Activated CD4-positive, alpha-beta T cell treated with anti-CD3 and anti-CD28 coated beads, Interleukin-2, amount 10 ng/mL, durations not matched to agents 24 days and 14 days (primary cell): ENCODE measurements at regions of chr18 and their contacts with region 1.

Region 1: DNA sequence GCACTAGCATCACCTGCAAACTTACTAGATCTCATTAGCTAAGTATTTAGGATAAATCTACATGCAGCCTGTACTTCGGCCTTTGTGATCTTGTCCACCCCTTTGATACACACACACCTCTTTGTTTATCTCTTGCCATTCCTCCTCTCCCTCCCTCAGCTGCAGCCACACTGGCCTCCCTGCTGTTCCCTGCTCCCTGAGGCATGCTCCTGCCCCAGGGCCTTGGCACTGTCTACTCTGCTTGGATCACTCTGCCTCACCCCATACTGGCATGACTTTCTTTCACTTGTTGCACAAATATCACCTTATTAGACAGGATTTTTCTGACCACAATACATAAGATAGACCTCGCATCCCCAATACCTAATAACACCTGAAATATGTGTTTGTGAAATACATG is 22.5 kb upstream of the TAF4B start:
- DNase-seq: no peak
- H3K4me3 Mint-ChIP-seq: no peak overlapping the region
- H3K27ac Mint-ChIP-seq: no peak overlapping the region
- H3K4me1 Mint-ChIP-seq: peaks cover 4% of the 10 kb centered on the region
- H3K27me3 Mint-ChIP-seq: peaks cover 3% of the 10 kb centered on the region

Region 2: DNA sequence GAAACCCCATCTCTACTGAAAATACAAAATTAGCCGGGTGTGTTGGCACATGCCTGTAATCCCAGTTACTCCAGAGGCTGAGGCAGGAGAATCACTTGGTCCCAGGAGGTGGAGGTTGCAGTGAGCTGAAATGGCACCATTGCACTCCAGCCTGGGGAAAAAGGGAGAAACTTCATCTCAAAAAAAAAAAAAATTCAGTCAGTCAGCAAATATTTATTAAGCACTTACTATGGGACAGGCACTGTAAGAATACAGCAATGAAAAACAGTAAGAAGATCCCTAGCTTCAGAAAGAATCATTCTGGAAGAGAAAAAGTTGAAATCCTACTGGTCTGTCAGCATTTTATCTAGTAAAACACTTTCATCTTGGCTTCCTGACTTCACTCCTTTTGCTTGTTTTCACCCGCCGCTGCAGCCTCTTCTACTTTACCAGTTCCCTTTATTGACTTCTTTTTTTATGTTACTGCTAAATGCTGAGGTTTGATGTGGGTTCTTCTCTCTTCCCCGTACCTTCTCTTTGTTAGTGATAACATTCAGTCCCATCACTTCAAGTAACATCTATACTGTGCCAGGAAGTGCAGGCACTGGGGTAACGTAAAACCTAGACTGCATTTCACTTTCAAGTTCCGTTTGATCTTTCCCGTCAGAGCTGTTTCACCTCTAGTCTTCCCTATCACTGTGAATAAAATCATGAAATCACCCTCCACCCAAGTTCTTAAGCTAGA is 11.7 kb after region 1 on chr18:
- intact Hi-C with region 1: loop called (anchors 2 kb)
- DNase-seq: peak; percentile 88
- H3K4me3 Mint-ChIP-seq: peak overlapping the region; percentile 85
- H3K27ac Mint-ChIP-seq: peak overlapping the region; percentile 91
- H3K4me1 Mint-ChIP-seq: peaks cover 22% of the 10 kb centered on the region
- H3K27me3 Mint-ChIP-seq: no peaks in the 10 kb centered on the region